H1 (cell line): ENCODE measurements at regions of chr17 and their contacts with region 1.

Region 1: DNA sequence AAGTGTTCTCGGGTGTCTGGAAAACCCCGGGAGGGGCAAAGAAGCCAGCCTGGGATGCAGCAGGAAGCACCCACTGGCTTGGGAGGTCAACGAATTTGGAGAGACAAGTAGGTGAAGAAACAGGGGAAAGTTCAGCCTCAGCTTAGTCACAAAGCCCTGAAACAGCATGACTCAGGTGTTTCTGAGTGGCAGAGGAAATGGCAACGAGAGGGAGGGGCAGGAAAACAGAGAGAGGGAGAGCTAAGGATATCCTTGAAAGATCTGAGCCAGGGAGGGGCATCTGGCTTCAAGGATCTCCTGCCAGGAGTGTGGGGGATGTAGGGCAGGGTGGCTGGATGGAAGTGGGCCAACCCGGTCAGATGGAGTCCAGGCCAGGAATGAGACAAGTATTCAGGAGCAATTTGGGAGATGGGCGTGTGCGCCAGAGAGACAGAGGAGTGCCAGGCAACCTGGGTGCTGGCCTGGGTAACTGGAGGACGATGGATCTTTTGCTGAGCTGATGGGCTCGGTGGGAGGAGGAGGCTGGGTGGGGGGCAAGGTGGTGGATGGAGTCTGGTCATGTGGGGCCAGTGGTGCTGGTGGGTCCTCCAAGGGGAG is 27.2 kb downstream of the ABCC3 start:
- DNase-seq: no peak
- H3K4me3 ChIP-seq: no peak overlapping the region
- H3K27ac ChIP-seq: no peak overlapping the region
- H3K4me1 ChIP-seq: peaks cover 3 to 8% (median 5%) of the 10 kb centered on the region in 4 experiments; a peak in 6 of 7 replicates
- H3K27me3 ChIP-seq: no peaks in the 10 kb centered on the region
- CTCF ChIP-seq: no peak
- EP300 ChIP-seq: no peak
- POLR2A ChIP-seq: no peak
- RAD21 ChIP-seq: no peak

Region 2: GRCh38 chr17:50471009-50471905 is 190.6 kb before region 1 on chr17:
- CTCF ChIA-PET with region 1: no interaction called
- POLR2A ChIA-PET with region 1: no interaction called
- DNase-seq: no peak
- H3K4me3 ChIP-seq: no peak overlapping the region
- H3K27ac ChIP-seq: no peak overlapping the region
- H3K4me1 ChIP-seq: peaks cover 0 to 17% (median 7%) of the 10 kb centered on the region in 4 experiments; a peak in 6 of 7 replicates
- H3K27me3 ChIP-seq: peaks cover 8 to 39% (median 26%) of the 10 kb centered on the region in 4 experiments; a peak in 6 of 7 replicates
- CTCF ChIP-seq: no peak
- EP300 ChIP-seq: no peak
- POLR2A ChIP-seq: no peak
- RAD21 ChIP-seq: no peak

Region 3: DNA sequence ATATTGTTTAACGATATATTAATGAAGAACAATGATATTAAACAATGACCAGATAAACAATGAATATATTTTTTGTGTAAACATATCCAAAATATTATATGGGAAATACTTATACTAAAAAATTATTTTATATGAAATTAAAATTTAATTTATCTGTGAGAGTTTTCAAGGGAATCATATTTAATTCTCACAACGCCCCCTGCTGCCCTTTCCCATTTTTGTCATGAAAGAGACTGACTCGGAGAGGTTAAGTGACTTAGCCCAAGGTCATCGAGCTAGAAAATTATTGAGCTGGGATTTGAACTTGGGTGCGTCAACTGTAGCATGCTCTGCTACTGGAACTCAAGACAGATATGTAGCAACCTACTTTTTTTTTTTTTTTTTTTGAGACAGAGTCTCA is 160.8 kb before region 1 on chr17:
- CTCF ChIA-PET with region 1: no interaction called
- POLR2A ChIA-PET with region 1: no interaction called
- DNase-seq: no peak
- H3K4me3 ChIP-seq: no peak overlapping the region
- H3K27ac ChIP-seq: no peak overlapping the region
- H3K4me1 ChIP-seq: peaks cover 5 to 9% (median 6%) of the 10 kb centered on the region in 4 experiments; a peak in 6 of 7 replicates
- H3K27me3 ChIP-seq: no peaks in the 10 kb centered on the region
- CTCF ChIP-seq: peak in 2 of 3 experiments; percentile 11 to 43; a peak in 2 of 4 replicates
- EP300 ChIP-seq: no peak
- POLR2A ChIP-seq: no peak
- RAD21 ChIP-seq: 0 out of 4 replicates have a peak, but pooled peaks of 1 of the 2 experiments have one; percentile 13

Region 4: GRCh38 chr17:50649042-50649904 is 12.6 kb before region 1 on chr17:
- CTCF ChIA-PET with region 1: interaction called, 20 read pairs
- POLR2A ChIA-PET with region 1: interaction called, 3 read pairs
- DNase-seq: no peak
- H3K4me3 ChIP-seq: no peak overlapping the region
- H3K27ac ChIP-seq: no peak overlapping the region
- H3K4me1 ChIP-seq: no peaks in the 10 kb centered on the region
- H3K27me3 ChIP-seq: no peaks in the 10 kb centered on the region
- CTCF ChIP-seq: no peak
- EP300 ChIP-seq: no peak
- POLR2A ChIP-seq: no peak
- RAD21 ChIP-seq: no peak

Region 5: GRCh38 chr17:50675627-50676026 is 13.7 kb after region 1 on chr17:
- CTCF ChIA-PET with region 1: interaction called, 16 read pairs
- POLR2A ChIA-PET with region 1: interaction called, 3 read pairs
- DNase-seq: no peak
- H3K4me3 ChIP-seq: no peak overlapping the region
- H3K27ac ChIP-seq: no peak overlapping the region
- H3K4me1 ChIP-seq: no peaks in the 10 kb centered on the region
- H3K27me3 ChIP-seq: no peaks in the 10 kb centered on the region
- CTCF ChIP-seq: no peak
- EP300 ChIP-seq: no peak
- POLR2A ChIP-seq: no peak
- RAD21 ChIP-seq: no peak

Region 6: DNA sequence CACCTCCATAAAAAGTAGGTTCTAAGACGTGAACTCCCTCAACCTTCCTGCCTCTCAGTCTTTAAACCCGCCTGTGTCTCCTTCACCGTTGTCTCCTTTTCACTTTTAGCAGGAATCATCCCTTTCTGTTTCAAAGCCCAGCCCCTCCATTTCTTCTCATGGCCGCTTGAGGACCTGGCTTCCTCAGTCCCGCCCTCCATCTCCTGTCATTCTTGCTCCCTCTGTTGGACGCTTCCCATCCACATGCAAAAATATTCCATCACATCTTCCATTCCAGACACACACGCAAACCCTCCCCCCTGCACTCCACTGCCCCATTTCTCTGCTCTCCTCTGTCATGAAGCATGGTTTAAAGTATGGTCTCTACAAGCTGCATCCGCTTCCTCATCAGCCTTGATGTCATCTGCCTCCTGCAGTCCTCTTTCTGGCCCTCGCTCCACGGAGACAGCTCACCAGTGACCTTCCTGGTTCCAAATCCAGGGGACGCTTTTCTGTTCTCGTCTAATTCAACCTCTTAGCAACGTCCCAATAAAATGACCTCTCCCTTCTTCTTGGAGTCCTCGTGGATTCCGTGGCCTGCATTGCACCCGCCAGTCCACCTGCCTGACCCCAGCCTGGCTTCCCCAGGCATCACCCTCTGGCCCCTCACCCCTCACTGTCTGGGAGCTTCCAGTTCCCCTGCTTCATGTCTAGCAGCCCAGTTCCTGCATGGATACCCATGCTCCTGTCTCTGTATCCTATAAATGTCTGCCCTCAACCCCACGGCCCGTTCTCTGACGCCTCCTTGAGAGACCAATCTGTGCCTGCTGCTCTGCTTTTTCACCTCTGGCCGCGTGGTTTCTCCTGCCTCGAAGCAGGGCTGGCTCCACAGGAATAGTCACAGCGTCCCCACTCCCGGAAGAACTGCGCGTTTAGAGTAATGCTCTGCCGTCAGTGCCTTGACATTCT is 19.6 kb after region 1 on chr17:
- CTCF ChIA-PET with region 1: interaction called, 25 read pairs
- POLR2A ChIA-PET with region 1: interaction called, 4 read pairs
- DNase-seq: no peak
- H3K4me3 ChIP-seq: no peak overlapping the region
- H3K27ac ChIP-seq: no peak overlapping the region
- H3K4me1 ChIP-seq: peaks cover 0 to 10% (median 1%) of the 10 kb centered on the region in 4 experiments; a peak in 3 of 7 replicates
- H3K27me3 ChIP-seq: no peaks in the 10 kb centered on the region
- CTCF ChIP-seq: peak; percentile 13 to 51 (median 45)
- EP300 ChIP-seq: no peak
- POLR2A ChIP-seq: no peak
- RAD21 ChIP-seq: peak; percentile 37 to 51

Region 7: GRCh38 chr17:50686494-50687199 is 24.8 kb after region 1 on chr17:
- CTCF ChIA-PET with region 1: interaction called, 96 read pairs
- POLR2A ChIA-PET with region 1: interaction called, 4 read pairs
- DNase-seq: no peak
- H3K4me3 ChIP-seq: no peak overlapping the region
- H3K27ac ChIP-seq: no peak overlapping the region
- H3K4me1 ChIP-seq: peaks cover 1 to 28% (median 10%) of the 10 kb centered on the region in 4 experiments; a peak in 6 of 7 replicates
- H3K27me3 ChIP-seq: no peaks in the 10 kb centered on the region
- CTCF ChIP-seq: no peak
- EP300 ChIP-seq: no peak
- POLR2A ChIP-seq: no peak
- RAD21 ChIP-seq: no peak

Region 8: GRCh38 chr17:50771991-50772785 is 110.3 kb after region 1 on chr17:
- CTCF ChIA-PET with region 1: no interaction called
- POLR2A ChIA-PET with region 1: no interaction called
- DNase-seq: no peak
- H3K4me3 ChIP-seq: no peak overlapping the region
- H3K27ac ChIP-seq: no peak overlapping the region
- H3K4me1 ChIP-seq: no peaks in the 10 kb centered on the region
- H3K27me3 ChIP-seq: no peaks in the 10 kb centered on the region
- CTCF ChIP-seq: no peak
- EP300 ChIP-seq: no peak
- POLR2A ChIP-seq: no peak
- RAD21 ChIP-seq: no peak